Caco-2 (cell line): ENCODE measurements at regions of chr4 and their contacts with region 1.

Region 1: GRCh38 chr4:54683616-54684346 is 26.0 kb downstream of the KIT start:
- DNase-seq: peak in 1 of 2 experiments; percentile 33
- H3K4me3 ChIP-seq: no peak overlapping the region
- H3K4me3 Mint-ChIP-seq: no peak overlapping the region
- H3K27ac Mint-ChIP-seq: no peak overlapping the region
- H3K4me1 ChIP-seq: no peaks in the 10 kb centered on the region
- H3K4me1 Mint-ChIP-seq: no peaks in the 10 kb centered on the region
- H3K27me3 ChIP-seq: no peaks in the 10 kb centered on the region
- H3K27me3 Mint-ChIP-seq: no peaks in the 10 kb centered on the region
- CTCF ChIP-seq: peak in 1 of 2 experiments; percentile 37

Region 2: DNA sequence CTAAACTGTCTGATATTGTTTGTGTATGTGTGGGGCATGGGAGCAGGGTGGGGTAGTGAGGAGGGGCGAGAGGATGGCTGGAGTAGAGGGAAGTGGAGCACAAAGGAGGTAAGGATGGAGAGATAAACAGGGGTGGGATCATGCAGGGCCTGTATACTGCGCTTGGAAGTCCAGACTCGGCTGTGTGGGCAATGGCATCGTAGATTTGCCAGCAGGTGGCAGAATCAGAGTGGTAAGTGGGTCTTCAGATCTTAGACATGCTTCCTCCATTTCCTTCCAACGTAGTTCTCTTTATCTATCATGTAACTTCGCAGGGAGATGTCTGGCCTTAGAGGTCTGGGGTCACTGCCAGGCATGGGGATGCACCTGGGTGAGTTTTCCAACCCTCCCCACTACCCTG is 299.2 kb before region 1 on chr4:
- CTCF ChIA-PET with region 1: no interaction called
- POLR2A ChIA-PET with region 1: no interaction called
- intact Hi-C with region 1: loop called (anchors 10 kb)
- DNase-seq: peak in 1 of 2 experiments; percentile 13
- H3K4me3 ChIP-seq: no peak overlapping the region
- H3K4me3 Mint-ChIP-seq: no peak overlapping the region
- H3K27ac Mint-ChIP-seq: no peak overlapping the region
- H3K4me1 ChIP-seq: no peaks in the 10 kb centered on the region
- H3K4me1 Mint-ChIP-seq: no peaks in the 10 kb centered on the region
- H3K27me3 ChIP-seq: no peaks in the 10 kb centered on the region
- H3K27me3 Mint-ChIP-seq: peaks cover 4% of the 10 kb centered on the region
- CTCF ChIP-seq: peak; percentile 26 to 34

Region 3: GRCh38 chr4:54645830-54646229 is 38.0 kb before region 1 on chr4:
- CTCF ChIA-PET with region 1: no interaction called
- POLR2A ChIA-PET with region 1: no interaction called
- intact Hi-C with region 1: no loop called
- DNase-seq: no peak
- H3K4me3 ChIP-seq: no peak overlapping the region
- H3K4me3 Mint-ChIP-seq: no peak overlapping the region
- H3K27ac Mint-ChIP-seq: no peak overlapping the region
- H3K4me1 ChIP-seq: no peaks in the 10 kb centered on the region; the same call in 1 of the 2 replicates
- H3K4me1 Mint-ChIP-seq: peaks cover 6% of the 10 kb centered on the region
- H3K27me3 ChIP-seq: no peaks in the 10 kb centered on the region
- H3K27me3 Mint-ChIP-seq: no peaks in the 10 kb centered on the region
- CTCF ChIP-seq: no peak

Region 4: GRCh38 chr4:54840992-54841768 is 157.4 kb after region 1 on chr4:
- CTCF ChIA-PET with region 1: no interaction called
- POLR2A ChIA-PET with region 1: no interaction called
- intact Hi-C with region 1: loop called (anchors 1 kb)
- DNase-seq: peak in 1 of 2 experiments; percentile 20
- H3K4me3 ChIP-seq: no peak overlapping the region
- H3K4me3 Mint-ChIP-seq: no peak overlapping the region
- H3K27ac Mint-ChIP-seq: no peak overlapping the region
- H3K4me1 ChIP-seq: no peaks in the 10 kb centered on the region
- H3K4me1 Mint-ChIP-seq: no peaks in the 10 kb centered on the region
- H3K27me3 ChIP-seq: no peaks in the 10 kb centered on the region
- H3K27me3 Mint-ChIP-seq: peaks cover 5% of the 10 kb centered on the region
- CTCF ChIP-seq: peak; percentile 11 to 16

Region 5: GRCh38 chr4:54945838-54946237 is 262.1 kb after region 1 on chr4:
- CTCF ChIA-PET with region 1: no interaction called
- POLR2A ChIA-PET with region 1: no interaction called
- intact Hi-C with region 1: loop called (anchors 5 kb)
- DNase-seq: no peak
- H3K4me3 ChIP-seq: no peak overlapping the region
- H3K4me3 Mint-ChIP-seq: no peak overlapping the region
- H3K27ac Mint-ChIP-seq: no peak overlapping the region
- H3K4me1 ChIP-seq: no peaks in the 10 kb centered on the region
- H3K4me1 Mint-ChIP-seq: no peaks in the 10 kb centered on the region
- H3K27me3 ChIP-seq: no peaks in the 10 kb centered on the region
- H3K27me3 Mint-ChIP-seq: peaks cover 3% of the 10 kb centered on the region
- CTCF ChIP-seq: no peak

Region 6: GRCh38 chr4:54961357-54961975 is 277.7 kb after region 1 on chr4:
- CTCF ChIA-PET with region 1: no interaction called
- POLR2A ChIA-PET with region 1: no interaction called
- intact Hi-C with region 1: loop called (anchors 1 kb)
- DNase-seq: peak in 1 of 2 experiments; percentile 21
- H3K4me3 ChIP-seq: no peak overlapping the region
- H3K4me3 Mint-ChIP-seq: no peak overlapping the region
- H3K27ac Mint-ChIP-seq: no peak overlapping the region
- H3K4me1 ChIP-seq: no peaks in the 10 kb centered on the region
- H3K4me1 Mint-ChIP-seq: no peaks in the 10 kb centered on the region
- H3K27me3 ChIP-seq: 0 out of 2 replicates have a peak, but pooled peaks cover 1% of the 10 kb centered on the region
- H3K27me3 Mint-ChIP-seq: peaks cover 17% of the 10 kb centered on the region
- CTCF ChIP-seq: peak; percentile 22 to 55